Caco-2 (cell line): ENCODE measurements at regions of chr1 and their contacts with region 1.

Region 1: DNA sequence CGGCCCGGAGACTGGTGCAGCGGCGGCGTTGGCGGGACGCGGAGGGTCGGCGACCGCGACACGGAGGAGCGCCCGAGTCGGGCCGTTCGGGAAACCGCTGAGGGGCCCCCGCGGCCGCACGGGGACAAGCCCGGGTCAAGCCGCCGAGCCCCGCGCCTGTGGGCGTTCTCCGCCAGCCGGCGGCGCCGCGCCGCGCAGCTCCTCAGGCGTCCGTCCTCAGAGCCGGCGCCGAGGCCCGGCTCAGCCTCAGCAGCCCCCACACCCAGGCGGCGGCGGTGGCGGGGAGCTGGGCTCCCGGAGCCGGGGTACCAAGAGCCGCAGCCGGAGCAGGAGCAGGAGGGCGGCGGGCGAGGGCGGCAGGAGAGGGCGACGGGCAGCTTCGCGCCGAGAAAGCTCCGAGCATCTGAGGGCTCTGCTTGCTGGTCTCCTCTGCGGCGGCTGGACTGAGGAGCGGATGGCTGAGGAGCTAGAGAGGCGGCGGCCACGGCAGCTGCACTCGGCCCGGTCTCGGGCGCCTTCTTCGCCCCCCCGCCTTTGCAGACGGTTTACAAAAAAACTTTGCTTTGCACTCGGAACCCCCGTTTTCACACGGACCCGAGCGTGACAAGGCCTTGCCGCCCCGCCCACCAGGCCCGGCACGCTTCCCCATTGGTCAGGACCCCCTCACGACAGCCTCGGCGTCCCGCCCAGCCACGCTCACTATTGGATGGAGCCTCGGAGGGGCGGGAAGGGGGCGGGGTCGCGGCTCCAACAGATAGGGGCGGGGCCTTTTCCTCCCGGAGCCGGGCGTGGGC is at the start of gene SLC30A1:
- DNase-seq: peak; percentile 98
- H3K4me3 ChIP-seq: peak within 1 kb of the TSS; percentile 98
- H3K4me3 Mint-ChIP-seq: peak within 1 kb of the TSS; percentile 72
- H3K27ac Mint-ChIP-seq: peak within 1 kb of the TSS; percentile 81
- H3K4me1 ChIP-seq: peaks cover 20% of the 10 kb centered on the region
- H3K4me1 Mint-ChIP-seq: peaks cover 19% of the 10 kb centered on the region
- H3K27me3 ChIP-seq: no peaks in the 10 kb centered on the region
- H3K27me3 Mint-ChIP-seq: no peaks in the 10 kb centered on the region
- CTCF ChIP-seq: no peak
- total RNA-seq, gene SLC30A1: 21.6 and 26.6 TPM in 2 replicates

Region 2: DNA sequence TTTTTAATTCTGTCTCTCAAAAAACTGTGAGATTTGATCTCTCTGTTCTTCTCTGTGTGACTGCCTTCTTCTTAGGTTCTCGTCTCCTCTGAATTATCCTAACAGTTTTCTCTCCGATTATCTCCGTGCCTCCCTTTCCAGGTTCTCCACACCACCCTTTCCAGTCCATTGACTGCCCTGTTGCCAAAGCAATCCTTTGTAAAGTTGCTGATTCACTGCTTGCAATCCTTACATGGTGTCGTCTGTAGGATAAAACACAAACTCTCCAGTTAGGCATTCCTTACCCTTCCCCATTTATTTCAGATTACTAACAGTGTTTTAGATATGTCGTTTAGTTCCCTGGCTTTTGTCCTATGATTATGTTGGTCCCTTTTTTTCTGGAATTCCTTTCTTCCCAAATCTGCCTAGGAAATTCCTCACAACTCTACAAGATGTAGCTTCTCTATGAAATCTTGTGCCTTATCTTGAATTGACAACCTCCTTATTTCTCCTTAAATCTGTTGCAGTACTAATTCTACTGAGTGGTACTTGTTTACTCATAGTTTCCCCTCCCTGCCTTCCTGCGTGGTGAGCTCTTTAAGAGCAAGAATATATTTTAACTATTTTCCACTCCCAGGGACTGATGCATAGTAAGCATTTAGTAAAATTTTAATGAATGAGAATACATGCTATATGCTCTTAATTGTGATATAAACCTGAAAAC is 297.4 kb before region 1 on chr1:
- CTCF ChIA-PET with region 1: no interaction called
- POLR2A ChIA-PET with region 1: no interaction called
- intact Hi-C with region 1: no loop called
- DNase-seq: no peak
- H3K4me3 ChIP-seq: no peak overlapping the region
- H3K4me3 Mint-ChIP-seq: no peak overlapping the region
- H3K27ac Mint-ChIP-seq: no peak overlapping the region
- H3K4me1 ChIP-seq: no peaks in the 10 kb centered on the region
- H3K4me1 Mint-ChIP-seq: no peaks in the 10 kb centered on the region
- H3K27me3 ChIP-seq: no peaks in the 10 kb centered on the region
- H3K27me3 Mint-ChIP-seq: no peaks in the 10 kb centered on the region
- CTCF ChIP-seq: no peak

Region 3: GRCh38 chr1:211589782-211590721 is 11.2 kb after region 1 on chr1:
- CTCF ChIA-PET with region 1: no interaction called
- POLR2A ChIA-PET with region 1: interaction called, 12 read pairs
- intact Hi-C with region 1: no loop called
- DNase-seq: no peak
- H3K4me3 ChIP-seq: no peak overlapping the region
- H3K4me3 Mint-ChIP-seq: no peak overlapping the region
- H3K27ac Mint-ChIP-seq: no peak overlapping the region
- H3K4me1 ChIP-seq: no peaks in the 10 kb centered on the region
- H3K4me1 Mint-ChIP-seq: peaks cover 9% of the 10 kb centered on the region
- H3K27me3 ChIP-seq: no peaks in the 10 kb centered on the region
- H3K27me3 Mint-ChIP-seq: no peaks in the 10 kb centered on the region
- CTCF ChIP-seq: no peak

Region 4: GRCh38 chr1:211603191-211603701 is 24.4 kb after region 1 on chr1:
- CTCF ChIA-PET with region 1: interaction called, 7 read pairs
- POLR2A ChIA-PET with region 1: interaction called, 3 read pairs
- intact Hi-C with region 1: loop called (anchors 1 kb)
- DNase-seq: peak; percentile 36 to 48
- H3K4me3 ChIP-seq: no peak overlapping the region
- H3K4me3 Mint-ChIP-seq: peak overlapping the region; percentile 14
- H3K27ac Mint-ChIP-seq: peak overlapping the region; percentile 32
- H3K4me1 ChIP-seq: peaks cover 53% of the 10 kb centered on the region
- H3K4me1 Mint-ChIP-seq: peaks cover 61% of the 10 kb centered on the region
- H3K27me3 ChIP-seq: no peaks in the 10 kb centered on the region
- H3K27me3 Mint-ChIP-seq: no peaks in the 10 kb centered on the region
- CTCF ChIP-seq: no peak

Region 5: GRCh38 chr1:211625040-211625439 is 46.2 kb after region 1 on chr1:
- CTCF ChIA-PET with region 1: interaction called, 25 read pairs
- POLR2A ChIA-PET with region 1: interaction called, 7 read pairs
- intact Hi-C with region 1: loop called (anchors 1 kb)
- DNase-seq: peak; percentile 63 to 67
- H3K4me3 ChIP-seq: no peak overlapping the region
- H3K4me3 Mint-ChIP-seq: no peak overlapping the region
- H3K27ac Mint-ChIP-seq: no peak overlapping the region
- H3K4me1 ChIP-seq: no peaks in the 10 kb centered on the region
- H3K4me1 Mint-ChIP-seq: peaks cover 9% of the 10 kb centered on the region
- H3K27me3 ChIP-seq: no peaks in the 10 kb centered on the region
- H3K27me3 Mint-ChIP-seq: no peaks in the 10 kb centered on the region
- CTCF ChIP-seq: peak; percentile 40

Region 6: GRCh38 chr1:211643324-211644212 is 64.7 kb after region 1 on chr1:
- CTCF ChIA-PET with region 1: interaction called, 9 read pairs
- POLR2A ChIA-PET with region 1: interaction called, 3 read pairs
- intact Hi-C with region 1: loop called (anchors 1 kb)
- DNase-seq: peak; percentile 80 to 93
- H3K4me3 ChIP-seq: no peak overlapping the region
- H3K4me3 Mint-ChIP-seq: peak overlapping the region; percentile 58
- H3K27ac Mint-ChIP-seq: peak overlapping the region; percentile 89
- H3K4me1 ChIP-seq: peaks cover 66% of the 10 kb centered on the region
- H3K4me1 Mint-ChIP-seq: peaks cover 41% of the 10 kb centered on the region
- H3K27me3 ChIP-seq: no peaks in the 10 kb centered on the region
- H3K27me3 Mint-ChIP-seq: no peaks in the 10 kb centered on the region
- CTCF ChIP-seq: peak in 1 of 2 experiments; percentile 15

Region 7: DNA sequence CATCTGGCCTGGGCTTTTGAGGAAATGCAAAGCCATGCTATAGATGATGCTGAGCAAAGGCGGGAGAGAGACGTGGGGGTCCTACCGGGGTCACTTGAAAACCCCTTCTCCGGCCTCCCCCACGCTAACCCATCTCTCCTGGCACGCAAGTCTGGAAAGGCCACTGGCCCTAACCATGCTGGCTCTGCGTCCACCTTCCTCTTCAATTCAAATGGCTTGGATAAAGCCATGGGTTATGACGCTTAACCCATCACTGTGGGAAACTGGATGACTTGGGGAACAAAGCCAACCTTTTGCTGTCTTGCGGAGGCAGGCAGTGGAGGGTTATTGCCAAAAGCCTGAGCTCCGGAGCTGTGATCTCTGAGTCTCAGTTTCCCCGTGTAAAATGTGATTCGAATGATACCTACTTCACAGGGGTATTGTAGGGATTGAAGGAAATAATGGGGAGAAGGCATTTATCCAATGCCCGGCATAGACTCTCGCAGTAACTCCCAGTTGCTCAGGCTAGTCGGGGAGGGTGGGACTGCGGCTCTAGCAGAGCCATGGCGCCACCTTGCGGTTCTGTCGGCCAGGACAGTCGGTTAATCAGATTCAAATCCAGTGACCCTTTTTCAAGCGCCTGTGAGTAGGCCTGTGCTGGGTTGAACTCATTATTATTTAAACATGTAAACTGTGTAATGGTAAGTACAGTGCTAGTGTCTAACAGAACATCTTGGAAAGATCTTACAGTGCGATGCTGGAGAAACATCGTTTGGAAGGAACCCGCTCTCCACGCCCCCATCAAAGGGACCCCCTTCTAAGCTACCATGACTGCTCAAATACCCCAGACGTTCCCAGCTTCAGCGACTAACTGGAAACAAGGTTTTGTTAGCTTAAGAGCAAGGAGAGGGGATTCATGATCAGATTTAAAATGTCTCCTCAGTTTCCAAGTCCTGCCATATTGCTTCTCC is 76.3 kb after region 1 on chr1:
- CTCF ChIA-PET with region 1: interaction called, 3 read pairs
- POLR2A ChIA-PET with region 1: no interaction called
- intact Hi-C with region 1: loop called (anchors 1 kb)
- DNase-seq: peak; percentile 84 to 89
- H3K4me3 ChIP-seq: no peak overlapping the region
- H3K4me3 Mint-ChIP-seq: no peak overlapping the region
- H3K27ac Mint-ChIP-seq: no peak overlapping the region
- H3K4me1 ChIP-seq: peaks cover 21% of the 10 kb centered on the region
- H3K4me1 Mint-ChIP-seq: peaks cover 22% of the 10 kb centered on the region
- H3K27me3 ChIP-seq: no peaks in the 10 kb centered on the region
- H3K27me3 Mint-ChIP-seq: no peaks in the 10 kb centered on the region
- CTCF ChIP-seq: peak; percentile 90 to 91

Region 8: GRCh38 chr1:211667065-211667617 is 88.3 kb after region 1 on chr1:
- CTCF ChIA-PET with region 1: interaction called, 8 read pairs
- POLR2A ChIA-PET with region 1: no interaction called
- intact Hi-C with region 1: loop called (anchors 1 kb)
- DNase-seq: peak in 1 of 2 experiments; percentile 61
- H3K4me3 ChIP-seq: no peak overlapping the region
- H3K4me3 Mint-ChIP-seq: no peak overlapping the region
- H3K27ac Mint-ChIP-seq: peak overlapping the region; percentile 10
- H3K4me1 ChIP-seq: peaks cover 17% of the 10 kb centered on the region
- H3K4me1 Mint-ChIP-seq: peaks cover 7% of the 10 kb centered on the region
- H3K27me3 ChIP-seq: no peaks in the 10 kb centered on the region
- H3K27me3 Mint-ChIP-seq: no peaks in the 10 kb centered on the region
- CTCF ChIP-seq: no peak